Caco-2 (cell line): ENCODE measurements at regions of chr13 and their contacts with region 1.

Region 1: GRCh38 chr13:95003019-95003813 is 290.9 kb upstream of the SOX21 start:
- DNase-seq: peak; percentile 41 to 63
- H3K4me3 ChIP-seq: peak overlapping the region; percentile 29
- H3K4me3 Mint-ChIP-seq: peak overlapping the region; percentile 62
- H3K27ac Mint-ChIP-seq: peak overlapping the region; percentile 33
- H3K4me1 ChIP-seq: no peaks in the 10 kb centered on the region; the same call in 1 of the 2 replicates
- H3K4me1 Mint-ChIP-seq: peaks cover 14% of the 10 kb centered on the region
- H3K27me3 ChIP-seq: no peaks in the 10 kb centered on the region
- H3K27me3 Mint-ChIP-seq: no peaks in the 10 kb centered on the region
- CTCF ChIP-seq: no peak

Region 2: DNA sequence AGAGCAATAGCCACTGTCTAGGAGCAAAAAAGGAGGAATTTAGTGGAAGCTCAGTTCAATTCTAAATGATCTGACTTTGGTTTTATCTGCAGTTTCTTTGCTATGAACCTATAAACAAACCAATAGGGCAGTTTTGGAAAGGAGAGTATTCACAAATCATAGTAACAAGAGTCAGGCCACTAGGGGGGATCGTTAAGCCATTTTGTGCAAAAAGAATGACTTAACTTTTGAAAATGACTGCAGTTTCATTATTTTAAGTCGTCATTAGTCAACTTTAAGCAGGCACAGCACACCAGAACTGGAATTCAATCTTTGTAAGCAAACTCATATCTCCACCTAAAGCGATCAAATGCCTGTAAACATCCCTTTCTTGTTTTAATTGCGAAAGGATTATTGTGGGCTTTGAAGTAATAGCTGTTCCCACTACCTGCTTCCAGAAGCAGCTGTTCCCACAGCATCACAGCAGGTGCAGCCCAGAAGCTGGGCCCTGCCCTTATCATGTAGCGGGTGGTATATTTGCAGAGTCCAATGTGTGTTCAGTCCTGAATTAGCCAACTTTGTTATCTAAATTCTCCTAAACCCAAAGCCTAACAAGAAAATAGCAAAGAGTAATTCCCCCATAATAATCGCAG is 342.4 kb before region 1 on chr13:
- CTCF ChIA-PET with region 1: no interaction called
- POLR2A ChIA-PET with region 1: no interaction called
- intact Hi-C with region 1: loop called (anchors 1 kb)
- DNase-seq: peak; percentile 60 to 72
- H3K4me3 ChIP-seq: no peak overlapping the region
- H3K4me3 Mint-ChIP-seq: peak overlapping the region; percentile 0
- H3K27ac Mint-ChIP-seq: no peak overlapping the region
- H3K4me1 ChIP-seq: no peaks in the 10 kb centered on the region
- H3K4me1 Mint-ChIP-seq: peaks cover 12% of the 10 kb centered on the region
- H3K27me3 ChIP-seq: no peaks in the 10 kb centered on the region; the same call in 1 of the 2 replicates
- H3K27me3 Mint-ChIP-seq: peaks cover 20% of the 10 kb centered on the region
- CTCF ChIP-seq: peak in 1 of 2 experiments; percentile 51

Region 3: DNA sequence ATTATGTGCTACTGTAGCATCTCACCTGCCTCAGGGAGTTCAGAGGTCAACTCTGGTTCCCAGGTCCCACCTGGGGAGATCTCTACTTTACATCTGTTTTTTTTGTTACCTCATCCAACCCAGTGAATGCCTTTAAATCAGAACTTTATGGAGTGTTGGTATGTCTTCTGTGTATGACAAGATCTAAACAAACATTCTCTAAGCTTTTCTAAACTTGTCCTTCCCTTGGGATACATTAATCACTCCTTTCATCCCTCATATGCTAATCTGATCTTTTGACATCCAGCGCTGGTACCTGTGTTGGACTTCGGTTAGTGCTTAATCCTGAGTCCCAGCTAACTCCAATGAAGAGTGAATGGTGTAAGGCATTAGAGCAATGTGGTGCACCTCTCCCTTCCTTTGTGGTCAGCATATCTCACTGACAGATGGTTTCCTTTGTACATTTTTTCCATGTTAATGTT is 84.6 kb after region 1 on chr13:
- CTCF ChIA-PET with region 1: no interaction called
- POLR2A ChIA-PET with region 1: no interaction called
- intact Hi-C with region 1: loop called (anchors 1 kb)
- DNase-seq: peak; percentile 83 to 87
- H3K4me3 ChIP-seq: no peak overlapping the region
- H3K4me3 Mint-ChIP-seq: no peak overlapping the region
- H3K27ac Mint-ChIP-seq: no peak overlapping the region
- H3K4me1 ChIP-seq: peaks cover 23% of the 10 kb centered on the region
- H3K4me1 Mint-ChIP-seq: peaks cover 19% of the 10 kb centered on the region
- H3K27me3 ChIP-seq: no peaks in the 10 kb centered on the region
- H3K27me3 Mint-ChIP-seq: no peaks in the 10 kb centered on the region
- CTCF ChIP-seq: no peak

Region 4: GRCh38 chr13:95123726-95124125 is 120.5 kb after region 1 on chr13:
- CTCF ChIA-PET with region 1: no interaction called
- POLR2A ChIA-PET with region 1: no interaction called
- intact Hi-C with region 1: loop called (anchors 1 kb)
- DNase-seq: peak; percentile 85 to 90
- H3K4me3 ChIP-seq: no peak overlapping the region
- H3K4me3 Mint-ChIP-seq: peak overlapping the region; percentile 41
- H3K27ac Mint-ChIP-seq: peak overlapping the region; percentile 78
- H3K4me1 ChIP-seq: peaks cover 49% of the 10 kb centered on the region
- H3K4me1 Mint-ChIP-seq: peaks cover 47% of the 10 kb centered on the region
- H3K27me3 ChIP-seq: no peaks in the 10 kb centered on the region
- H3K27me3 Mint-ChIP-seq: no peaks in the 10 kb centered on the region
- CTCF ChIP-seq: no peak

Region 5: GRCh38 chr13:95156208-95156607 is 153.0 kb after region 1 on chr13:
- CTCF ChIA-PET with region 1: interaction called, 5 read pairs
- POLR2A ChIA-PET with region 1: no interaction called
- intact Hi-C with region 1: loop called (anchors 5 kb)
- DNase-seq: no peak
- H3K4me3 ChIP-seq: no peak overlapping the region
- H3K4me3 Mint-ChIP-seq: no peak overlapping the region
- H3K27ac Mint-ChIP-seq: no peak overlapping the region
- H3K4me1 ChIP-seq: 0 out of 2 replicates have a peak, but pooled peaks cover 4% of the 10 kb centered on the region
- H3K4me1 Mint-ChIP-seq: no peaks in the 10 kb centered on the region
- H3K27me3 ChIP-seq: no peaks in the 10 kb centered on the region
- H3K27me3 Mint-ChIP-seq: no peaks in the 10 kb centered on the region
- CTCF ChIP-seq: peak; percentile 18 to 35